Activated CD8-positive, alpha-beta T cell treated with anti-CD3 and anti-CD28 coated beads, Interleukin-2, amount 10 ng/mL, durations not matched to agents 7 days and 5 days (primary cell): ENCODE measurements at regions of chr12 and their contacts with region 1.

Region 1: DNA sequence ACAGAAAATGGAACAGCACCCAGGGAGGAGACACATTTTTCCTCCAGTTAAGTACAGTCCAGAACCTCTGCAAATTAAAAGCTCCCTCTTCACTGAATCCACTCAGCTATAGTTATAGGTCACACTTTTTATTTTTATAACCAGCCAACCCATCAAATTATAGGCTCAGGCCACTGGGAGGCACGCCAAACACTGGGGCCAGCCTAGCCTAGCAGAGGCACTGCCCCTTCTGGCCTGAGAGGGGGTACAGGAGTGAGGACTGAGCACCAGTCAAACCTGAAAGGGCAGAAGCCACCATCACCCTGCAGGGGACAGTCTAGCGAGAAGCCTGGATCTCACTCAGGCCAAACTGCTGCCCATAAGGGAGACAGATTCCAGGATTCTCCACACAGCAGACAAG is 19.3 kb downstream of the FMNL3 start:
- DNase-seq: no peak
- ATAC-seq: no peak
- H3K4me3 Mint-ChIP-seq: no peak overlapping the region
- H3K27ac Mint-ChIP-seq: no peak overlapping the region
- H3K4me1 Mint-ChIP-seq: peaks cover 44% of the 10 kb centered on the region
- H3K27me3 Mint-ChIP-seq: no peaks in the 10 kb centered on the region

Region 2: DNA sequence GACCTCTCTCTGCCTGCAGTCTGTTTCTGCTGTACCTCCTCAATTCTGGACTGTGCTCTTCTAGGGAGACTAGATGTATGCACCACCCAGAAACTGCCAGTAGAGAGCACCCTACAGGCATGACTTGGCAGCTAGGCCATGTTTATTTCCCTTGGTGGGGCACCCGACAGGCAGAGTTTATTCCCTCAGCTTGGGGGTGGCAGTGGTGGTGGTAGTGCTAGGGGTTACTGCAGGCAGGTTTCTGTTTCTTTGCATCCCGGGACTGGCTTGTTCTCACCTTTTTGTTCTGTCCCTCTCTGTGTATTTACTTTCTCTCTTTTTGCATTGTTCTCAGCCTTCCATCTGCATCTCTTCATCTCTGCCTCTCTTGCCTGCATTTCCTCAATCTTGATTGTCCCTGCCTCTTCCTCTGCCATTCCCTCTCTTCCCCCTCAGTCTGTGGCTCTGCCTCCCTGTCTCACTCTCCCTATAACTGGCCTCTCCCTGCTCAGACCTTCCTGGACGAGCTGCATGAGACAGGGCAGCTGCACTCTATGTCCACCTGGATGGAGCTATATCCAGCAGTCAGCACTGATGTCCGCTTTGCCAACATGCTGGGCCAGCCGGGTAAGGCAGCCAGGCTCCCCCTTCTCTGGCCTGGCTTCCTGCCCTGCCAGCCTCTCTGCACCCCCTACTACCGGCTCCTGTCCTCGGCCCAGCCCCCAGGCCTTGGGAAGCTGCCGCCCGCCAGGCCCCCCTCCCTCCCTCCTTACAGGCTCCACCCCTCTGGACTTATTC is 50.8 kb before region 1 on chr12:
- CTCF ChIA-PET with region 1: interaction called, 22 read pairs
- POLR2A ChIA-PET with region 1: no interaction called
- DNase-seq: peak; percentile 79
- ATAC-seq: peak; percentile 89
- H3K4me3 Mint-ChIP-seq: no peak overlapping the region
- H3K27ac Mint-ChIP-seq: peak overlapping the region; percentile 28
- H3K4me1 Mint-ChIP-seq: peaks cover 31% of the 10 kb centered on the region
- H3K27me3 Mint-ChIP-seq: no peaks in the 10 kb centered on the region

Region 3: DNA sequence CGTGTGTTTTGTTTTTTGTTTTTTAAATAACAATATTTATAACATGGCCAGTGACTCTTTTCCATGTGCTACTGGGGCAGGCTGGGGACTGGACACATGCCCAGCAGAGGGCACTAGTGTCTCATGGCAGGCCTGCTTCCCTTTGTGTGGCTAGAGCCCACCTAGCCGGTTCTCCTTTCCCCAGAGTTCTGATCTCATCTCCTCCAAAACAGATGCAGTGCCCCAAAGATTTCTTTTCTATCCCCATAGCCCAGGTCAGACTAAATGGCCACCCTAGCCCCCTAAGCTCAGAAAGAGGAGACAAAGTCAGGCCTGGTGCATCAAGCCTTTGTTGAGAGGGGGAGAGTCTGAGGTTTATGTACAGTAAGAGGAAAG is 43.3 kb before region 1 on chr12:
- CTCF ChIA-PET with region 1: interaction called, 22 read pairs
- POLR2A ChIA-PET with region 1: no interaction called
- DNase-seq: peak; percentile 89
- ATAC-seq: peak; percentile 96
- H3K4me3 Mint-ChIP-seq: no peak overlapping the region
- H3K27ac Mint-ChIP-seq: peak overlapping the region; percentile 87
- H3K4me1 Mint-ChIP-seq: peaks cover 41% of the 10 kb centered on the region
- H3K27me3 Mint-ChIP-seq: no peaks in the 10 kb centered on the region

Region 4: GRCh38 chr12:49698619-49699545 is 10.9 kb after region 1 on chr12:
- CTCF ChIA-PET with region 1: interaction called, 46 read pairs
- POLR2A ChIA-PET with region 1: interaction called, 4 read pairs
- DNase-seq: peak; percentile 68
- ATAC-seq: peak; percentile 78
- H3K4me3 Mint-ChIP-seq: peak overlapping the region; percentile 76
- H3K27ac Mint-ChIP-seq: peak overlapping the region; percentile 92
- H3K4me1 Mint-ChIP-seq: peaks cover 58% of the 10 kb centered on the region
- H3K27me3 Mint-ChIP-seq: no peaks in the 10 kb centered on the region

Region 5: GRCh38 chr12:49707128-49707811 is 19.3 kb after region 1 on chr12 and contains the start of gene FMNL3:
- CTCF ChIA-PET with region 1: interaction called, 46 read pairs
- POLR2A ChIA-PET with region 1: interaction called, 4 read pairs
- DNase-seq: peak; percentile 98
- ATAC-seq: peak; percentile 96
- H3K4me3 Mint-ChIP-seq: peak within 1 kb of the TSS; percentile 90
- H3K27ac Mint-ChIP-seq: peak within 1 kb of the TSS; percentile 83
- H3K4me1 Mint-ChIP-seq: peaks cover 42% of the 10 kb centered on the region
- H3K27me3 Mint-ChIP-seq: peaks cover 26% of the 10 kb centered on the region
- total RNA-seq, gene FMNL3: 53.5 to 54.5 TPM